ENCODE measurements at regions of chr3 and their contacts with region 1.

Region 1: GRCh38 chr3:176939022-176939817 is 258.1 kb downstream of the TBL1XR1 start:
- H3K4me3 ChIP-seq: no peak overlapping the region
- H3K27ac ChIP-seq: no peak overlapping the region
- H3K4me1 ChIP-seq: no peaks in the 10 kb centered on the region
- CTCF ChIP-seq: no peak

Region 2: GRCh38 chr3:176872771-176873209 is 66.4 kb before region 1 on chr3:
- CTCF ChIA-PET with region 1: interaction called, 42 read pairs
- POLR2A ChIA-PET with region 1: no interaction called
- H3K4me3 ChIP-seq: no peak overlapping the region
- H3K27ac ChIP-seq: no peak overlapping the region
- H3K4me1 ChIP-seq: no peaks in the 10 kb centered on the region
- CTCF ChIP-seq: no peak

Region 3: GRCh38 chr3:176927706-176928581 is 11.3 kb before region 1 on chr3:
- CTCF ChIA-PET with region 1: interaction called, 13 read pairs
- POLR2A ChIA-PET with region 1: no interaction called
- H3K4me3 ChIP-seq: no peak overlapping the region
- H3K27ac ChIP-seq: no peak overlapping the region
- H3K4me1 ChIP-seq: no peaks in the 10 kb centered on the region
- CTCF ChIP-seq: no peak

Measured in HEK293 (cell line).